WTC11 (cell line): ENCODE measurements at regions of chr14 and their contacts with region 1.

Region 1: DNA sequence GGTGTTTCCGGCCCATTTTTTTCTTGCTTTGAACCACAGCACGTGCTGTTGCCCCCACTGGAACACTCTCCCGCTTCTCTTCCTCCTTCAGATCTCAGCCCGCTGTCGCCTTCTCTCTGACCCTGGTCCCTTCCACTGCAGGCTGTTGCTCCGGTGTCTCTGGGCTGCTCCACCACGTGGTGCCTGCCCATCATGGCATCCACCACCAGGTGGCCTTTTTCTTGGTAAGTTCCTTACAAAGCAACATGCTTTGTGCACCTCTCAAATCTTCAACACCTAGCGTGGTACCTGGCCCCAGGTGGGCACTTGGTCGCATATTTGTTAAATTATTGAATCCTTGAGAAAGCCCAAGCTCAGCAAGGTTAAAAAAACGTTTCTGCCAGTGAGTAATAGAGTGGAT is 19.1 kb downstream of the TUNAR start:
- DNase-seq: peak; percentile 68
- ATAC-seq: peak; percentile 81
- H3K4me3 Mint-ChIP-seq: no peak overlapping the region
- H3K27ac Mint-ChIP-seq: no peak overlapping the region; the same call in 1 of the 2 replicates
- H3K4me1 Mint-ChIP-seq: peaks cover 57% of the 10 kb centered on the region
- H3K27me3 Mint-ChIP-seq: no peaks in the 10 kb centered on the region
- CTCF ChIP-seq: peak; percentile 45; the same call in 1 of the 2 replicates

Region 2: GRCh38 chr14:95850417-95850816 is 45.3 kb before region 1 on chr14:
- CTCF ChIA-PET with region 1: no interaction called
- POLR2A ChIA-PET with region 1: no interaction called
- DNase-seq: no peak
- ATAC-seq: no peak
- H3K4me3 Mint-ChIP-seq: no peak overlapping the region
- H3K27ac Mint-ChIP-seq: no peak overlapping the region
- H3K4me1 Mint-ChIP-seq: peaks cover 17% of the 10 kb centered on the region
- H3K27me3 Mint-ChIP-seq: peaks cover 5% of the 10 kb centered on the region; the same call in 1 of the 2 replicates
- CTCF ChIP-seq: no peak

Region 3: DNA sequence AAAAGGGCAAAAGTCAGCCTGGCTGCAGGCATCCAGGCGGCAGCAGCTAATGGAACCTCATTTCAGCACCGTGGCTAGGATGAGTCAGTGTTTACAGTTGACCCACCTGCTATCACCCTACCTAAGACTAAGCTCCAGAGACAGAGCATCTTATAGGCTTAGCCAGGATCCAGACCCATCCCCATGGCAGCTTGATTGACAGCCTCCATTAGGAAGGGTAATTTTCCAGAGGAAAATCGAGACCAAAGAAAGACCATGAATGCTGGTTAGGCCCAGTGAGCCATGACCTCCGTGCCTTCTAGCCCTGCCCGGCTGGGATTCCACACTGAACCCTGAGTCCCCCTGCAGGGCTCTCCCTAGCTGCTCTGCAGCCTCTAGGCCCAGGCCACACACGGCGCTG is 19.6 kb after region 1 on chr14:
- CTCF ChIA-PET with region 1: interaction called, 11 read pairs
- POLR2A ChIA-PET with region 1: no interaction called
- DNase-seq: peak; percentile 53
- ATAC-seq: peak; percentile 95
- H3K4me3 Mint-ChIP-seq: no peak overlapping the region
- H3K27ac Mint-ChIP-seq: peak overlapping the region; percentile 85
- H3K4me1 Mint-ChIP-seq: peaks cover 44% of the 10 kb centered on the region
- H3K27me3 Mint-ChIP-seq: no peaks in the 10 kb centered on the region
- CTCF ChIP-seq: no peak

Region 4: DNA sequence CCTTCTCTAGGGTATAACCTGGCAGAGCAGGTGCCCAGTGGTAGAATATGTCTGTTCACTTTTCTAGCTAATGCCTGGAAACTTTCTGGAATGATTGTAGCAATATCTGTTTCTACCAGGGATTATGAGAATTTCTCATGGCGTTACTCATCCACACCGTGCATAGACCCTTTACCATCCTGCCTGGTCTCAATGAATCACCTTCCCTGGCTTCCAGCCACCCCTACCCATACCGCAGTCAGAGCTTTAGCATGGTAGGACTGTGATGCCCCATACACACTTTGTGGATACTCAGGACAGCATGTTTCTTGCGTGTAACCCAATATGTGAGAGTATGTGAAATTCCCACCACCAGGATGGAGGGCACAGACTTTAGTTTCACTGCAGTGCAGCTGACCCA is 26.4 kb after region 1 on chr14:
- CTCF ChIA-PET with region 1: interaction called, 10 read pairs
- POLR2A ChIA-PET with region 1: no interaction called
- DNase-seq: no peak
- ATAC-seq: no peak
- H3K4me3 Mint-ChIP-seq: no peak overlapping the region
- H3K27ac Mint-ChIP-seq: no peak overlapping the region
- H3K4me1 Mint-ChIP-seq: peaks cover 49% of the 10 kb centered on the region
- H3K27me3 Mint-ChIP-seq: no peaks in the 10 kb centered on the region
- CTCF ChIP-seq: no peak

Region 5: DNA sequence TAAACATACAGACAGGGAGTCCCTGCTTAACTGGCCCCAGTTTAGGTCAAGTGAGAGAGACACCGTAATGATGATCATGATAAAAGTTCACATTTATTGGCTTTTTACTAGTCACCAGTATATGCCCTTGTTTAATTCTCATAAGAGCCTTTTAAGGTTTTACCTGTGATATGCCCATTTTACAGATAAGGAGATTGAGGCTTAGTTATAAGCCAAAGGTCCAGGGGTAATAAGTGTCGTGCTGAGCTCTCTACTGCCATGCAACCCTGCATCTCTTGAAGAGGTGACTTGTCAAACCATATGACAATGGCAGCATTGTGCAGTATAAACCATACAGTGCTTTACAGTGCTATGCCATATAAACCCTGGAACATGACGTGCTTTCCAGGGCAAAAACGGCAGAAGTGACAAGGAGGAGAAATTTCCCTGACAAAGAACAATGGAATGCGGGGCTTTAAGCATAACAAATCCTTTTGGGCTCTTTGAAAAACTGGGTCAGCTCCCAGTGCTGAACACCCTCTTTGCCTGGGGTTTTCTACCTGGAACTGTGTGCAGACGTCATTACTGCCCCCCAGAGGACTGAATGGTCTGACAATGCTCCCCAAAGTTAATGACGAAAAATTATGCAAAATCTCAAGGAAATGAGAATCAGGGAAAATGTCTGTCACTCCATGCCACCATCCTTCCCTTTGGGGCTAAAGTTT is 83.8 kb after region 1 on chr14:
- CTCF ChIA-PET with region 1: interaction called, 20 read pairs
- POLR2A ChIA-PET with region 1: interaction called, 3 read pairs
- DNase-seq: peak; percentile 52
- ATAC-seq: peak; percentile 87
- H3K4me3 Mint-ChIP-seq: peak overlapping the region; percentile 24; the same call in 1 of the 2 replicates
- H3K27ac Mint-ChIP-seq: no peak overlapping the region; the same call in 1 of the 2 replicates
- H3K4me1 Mint-ChIP-seq: peaks cover 27% of the 10 kb centered on the region
- H3K27me3 Mint-ChIP-seq: no peaks in the 10 kb centered on the region; the same call in none of the 2 replicates
- CTCF ChIP-seq: no peak